AG04449 (cell line): ENCODE measurements at regions of chr6 and their contacts with region 1.

Region 1: DNA sequence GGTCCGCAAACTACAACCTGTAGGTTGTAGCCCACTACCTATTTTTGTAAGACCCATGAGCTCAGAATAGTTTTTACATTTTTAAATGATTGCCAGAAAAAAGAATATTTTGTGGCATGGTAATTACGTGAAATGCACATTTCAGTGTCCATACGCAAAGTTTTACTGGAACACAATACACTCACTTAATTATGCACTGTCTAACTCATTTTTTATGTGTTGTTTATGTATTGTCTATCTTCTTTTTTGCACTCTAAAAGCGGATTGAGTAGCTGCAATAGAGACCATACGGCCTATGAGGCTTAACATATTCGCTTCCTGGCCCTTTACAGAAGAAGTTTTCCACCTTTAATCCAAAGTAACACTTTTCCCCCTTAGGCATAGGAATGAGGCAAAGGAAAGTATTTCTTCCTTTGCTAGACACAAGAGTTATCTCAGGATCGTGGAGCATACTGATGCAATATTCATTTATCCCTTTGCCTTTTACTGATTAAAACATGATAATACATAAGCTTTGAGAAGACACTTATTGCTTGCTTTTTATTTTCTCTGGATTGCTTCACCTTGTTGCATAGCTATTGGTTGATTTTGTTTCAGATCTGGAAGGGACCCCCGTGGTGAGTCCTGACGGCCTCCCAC is 69.8 kb downstream of the FNDC1 start:
- DNase-seq: no peak
- H3K4me3 ChIP-seq: no peak overlapping the region
- CTCF ChIP-seq: no peak

Region 2: GRCh38 chr6:159224452-159224851 is 14.6 kb before region 1 on chr6:
- CTCF ChIA-PET with region 1: no interaction called
- POLR2A ChIA-PET with region 1: no interaction called
- DNase-seq: no peak
- H3K4me3 ChIP-seq: no peak overlapping the region
- CTCF ChIP-seq: no peak

Region 3: DNA sequence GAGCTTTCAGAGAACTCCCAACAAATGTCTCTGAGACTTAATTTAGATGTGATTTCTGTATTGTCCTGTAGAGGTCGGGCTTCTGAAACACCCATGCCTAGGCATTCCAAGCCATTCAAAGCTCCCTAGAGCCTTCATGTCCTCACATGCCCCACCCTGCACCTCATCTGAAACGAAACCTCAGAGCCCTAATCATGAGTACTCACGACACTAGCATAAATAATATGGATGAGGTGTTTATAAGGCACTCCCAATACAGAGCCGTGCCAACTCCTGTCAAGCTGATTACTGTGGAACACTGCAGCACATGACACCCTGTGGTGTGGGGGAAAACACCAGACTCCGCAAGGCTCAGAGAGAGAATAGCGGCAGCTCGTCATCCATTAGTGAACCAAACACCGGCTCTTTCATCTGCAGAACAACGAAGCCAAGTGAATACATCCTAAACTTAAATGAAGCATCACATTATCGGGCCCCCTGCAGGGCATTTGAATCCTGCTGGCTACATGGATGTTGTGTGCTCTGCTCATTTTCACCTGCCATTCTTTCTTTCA is 14.0 kb after region 1 on chr6:
- CTCF ChIA-PET with region 1: interaction called, 60 read pairs
- POLR2A ChIA-PET with region 1: no interaction called
- DNase-seq: no peak
- H3K4me3 ChIP-seq: no peak overlapping the region
- CTCF ChIP-seq: peak; percentile 26